SK-N-SH (cell line): ENCODE measurements at regions of chr11 and their contacts with region 1.

Region 1: DNA sequence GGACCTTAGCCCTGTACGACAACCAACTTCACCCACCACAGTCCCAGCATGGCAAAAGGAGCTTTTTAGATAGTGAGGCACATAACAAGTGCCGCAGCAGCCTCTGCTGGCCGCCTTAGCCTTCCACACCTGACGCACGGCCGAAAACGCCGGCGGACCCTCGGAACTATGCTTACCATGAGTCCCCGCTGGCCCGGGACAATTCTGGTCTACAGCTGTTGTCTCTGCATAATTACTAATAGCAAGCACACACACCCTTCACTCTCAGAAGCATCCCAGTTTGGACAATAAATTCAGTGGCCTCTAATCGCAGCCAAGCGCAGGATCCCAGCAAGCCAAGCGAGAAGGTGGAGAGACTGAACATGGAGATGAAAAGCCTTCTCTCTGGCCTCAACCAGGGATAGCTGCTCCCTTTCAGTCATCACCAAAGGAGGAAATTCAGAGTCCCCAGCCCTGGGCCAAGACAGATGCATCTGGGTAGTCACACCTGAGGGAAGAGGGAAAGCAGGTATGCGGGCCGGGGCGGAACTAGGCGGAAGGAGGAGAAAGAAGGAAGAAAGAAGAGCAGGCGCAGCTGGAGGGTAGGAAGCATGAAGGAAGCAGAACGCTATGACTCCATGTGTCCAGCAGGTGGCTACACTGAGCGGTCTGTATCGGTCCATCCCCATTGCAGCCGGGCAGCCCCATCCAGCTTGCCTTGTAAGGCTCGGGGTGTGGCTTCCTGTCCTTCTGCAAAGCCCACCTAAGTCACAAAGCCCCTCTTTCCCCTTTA is 40.3 kb downstream of the BUD13 start:
- DNase-seq: peak; percentile 86
- H3K4me3 ChIP-seq: no peak overlapping the region
- H3K27ac ChIP-seq: no peak overlapping the region
- H3K4me1 ChIP-seq: peaks cover 0 to 17% of the 10 kb centered on the region in 2 experiments; a peak in 1 of 4 replicates
- H3K27me3 ChIP-seq: no peaks in the 10 kb centered on the region
- CTCF ChIP-seq: peak; percentile 78
- EP300 ChIP-seq: no peak
- RAD21 ChIP-seq: peak; percentile 67

Region 2: GRCh38 chr11:116703421-116703820 is 29.0 kb before region 1 on chr11:
- CTCF ChIA-PET with region 1: interaction called, 60 read pairs
- POLR2A ChIA-PET with region 1: interaction called, 3 read pairs
- DNase-seq: peak; percentile 94
- H3K4me3 ChIP-seq: no peak overlapping the region
- H3K27ac ChIP-seq: peak overlapping the region in 1 of 2 experiments; percentile 95; a peak in 2 of 4 replicates
- H3K4me1 ChIP-seq: peaks cover 0 to 24% of the 10 kb centered on the region in 2 experiments; a peak in 1 of 4 replicates
- H3K27me3 ChIP-seq: no peaks in the 10 kb centered on the region
- CTCF ChIP-seq: no peak
- EP300 ChIP-seq: peak in 1 of 2 experiments; percentile 38; a peak in 1 of 4 replicates
- RAD21 ChIP-seq: peak; percentile 31

Region 3: DNA sequence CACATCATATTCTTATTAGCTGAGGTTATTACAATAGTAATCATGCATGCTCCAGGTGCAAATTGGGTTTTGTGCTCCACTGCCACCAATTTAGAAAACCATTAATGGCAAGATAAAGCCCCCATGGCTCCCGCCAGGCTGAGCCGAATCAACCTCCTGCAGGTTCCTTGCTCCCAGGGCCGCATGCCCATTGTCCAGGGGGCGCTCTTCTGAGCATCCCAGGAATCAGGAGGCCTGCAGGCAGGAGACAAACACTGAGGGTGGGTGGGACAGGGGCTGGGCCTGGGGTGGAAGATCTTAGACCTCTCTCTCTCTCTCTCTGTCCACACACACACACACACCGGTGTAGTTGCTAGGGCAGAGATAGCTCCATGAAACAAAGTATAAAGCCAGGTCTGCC is 17.1 kb before region 1 on chr11:
- CTCF ChIA-PET with region 1: interaction called, 35 read pairs
- POLR2A ChIA-PET with region 1: no interaction called
- DNase-seq: no peak
- H3K4me3 ChIP-seq: no peak overlapping the region
- H3K27ac ChIP-seq: no peak overlapping the region
- H3K4me1 ChIP-seq: no peaks in the 10 kb centered on the region
- H3K27me3 ChIP-seq: peaks cover 3% of the 10 kb centered on the region; the same call in 1 of the 2 replicates
- CTCF ChIP-seq: no peak
- EP300 ChIP-seq: no peak
- RAD21 ChIP-seq: no peak

Region 4: DNA sequence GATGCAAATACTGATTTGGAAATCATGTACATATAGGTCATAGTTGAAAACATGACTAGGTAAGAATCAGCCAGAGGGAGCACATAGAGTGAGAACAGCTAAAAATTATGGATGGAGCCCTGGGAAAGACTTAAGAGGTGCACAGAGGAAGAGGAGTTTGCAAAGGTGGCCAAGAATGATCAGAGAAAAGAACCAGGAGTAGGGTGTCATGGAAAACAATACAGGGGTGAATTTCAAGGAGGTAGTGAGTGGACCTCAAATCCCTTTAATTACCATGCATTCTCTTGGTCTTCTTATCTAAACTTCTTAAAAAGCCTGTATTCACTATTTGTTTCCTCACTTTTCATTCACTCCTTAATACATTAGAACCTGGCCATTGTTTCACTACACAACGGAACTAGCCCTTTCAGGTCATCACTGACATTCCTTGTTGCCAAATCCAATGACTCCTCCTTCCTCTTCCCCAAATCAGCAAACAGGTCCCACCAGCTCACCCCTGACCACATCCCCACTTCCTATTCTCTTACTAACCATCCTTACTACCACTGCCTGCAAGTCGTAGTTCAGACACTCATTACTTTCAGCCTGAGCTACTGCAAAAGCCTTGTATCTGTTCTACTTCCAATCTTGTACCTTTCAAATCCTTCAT is 17.7 kb after region 1 on chr11:
- CTCF ChIA-PET with region 1: interaction called, 16 read pairs
- POLR2A ChIA-PET with region 1: no interaction called
- DNase-seq: no peak
- H3K4me3 ChIP-seq: no peak overlapping the region
- H3K27ac ChIP-seq: no peak overlapping the region
- H3K4me1 ChIP-seq: no peaks in the 10 kb centered on the region
- H3K27me3 ChIP-seq: no peaks in the 10 kb centered on the region
- CTCF ChIP-seq: no peak
- EP300 ChIP-seq: no peak
- RAD21 ChIP-seq: no peak